ENCODE measurements at regions of chr1 and their contacts with region 1.

Region 1: GRCh38 chr1:32716312-32717148 is 14.0 kb upstream of the SYNC start:
- DNase-seq: no peak
- ATAC-seq: peak; percentile 57

Region 2: GRCh38 chr1:32773018-32773763 is 56.7 kb after region 1 on chr1:
- intact Hi-C with region 1: loop called (anchors 1 kb)
- DNase-seq: peak; percentile 88
- ATAC-seq: peak; percentile 86

Region 3: DNA sequence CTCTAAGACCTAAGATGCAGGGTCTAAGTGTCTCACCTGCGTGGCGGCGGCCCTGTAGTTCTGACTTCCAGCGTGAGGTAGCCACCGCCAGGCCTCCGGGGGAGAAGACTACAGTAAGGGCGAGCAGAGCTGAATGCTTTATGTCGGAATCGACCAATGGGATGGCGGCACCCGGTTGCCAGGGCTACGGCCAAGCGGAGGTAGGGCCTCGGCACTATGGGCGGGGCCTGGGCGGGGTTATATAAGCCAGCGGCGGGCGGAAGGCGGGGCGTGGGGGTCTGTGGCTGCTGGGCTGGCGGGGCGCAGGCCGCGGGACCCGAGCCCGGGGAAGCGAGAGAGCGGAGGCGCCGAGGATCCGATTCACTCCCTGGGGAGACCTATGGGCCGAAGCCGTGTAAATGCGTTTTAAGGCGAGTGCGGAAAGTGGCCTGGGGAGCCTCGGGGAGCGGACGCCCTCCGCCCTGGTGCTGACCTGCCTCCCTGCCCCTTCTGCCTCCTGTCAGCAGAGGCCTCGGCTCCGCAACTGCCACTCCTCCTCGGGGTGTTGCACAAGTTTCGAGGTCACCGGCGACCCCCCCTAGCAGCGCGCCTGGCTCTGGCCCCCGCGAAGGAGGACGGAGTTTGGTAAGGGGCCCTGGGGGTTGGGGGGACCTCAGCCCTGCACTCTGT is 364.5 kb after region 1 on chr1 and contains the start of gene AZIN2:
- intact Hi-C with region 1: loop called (anchors 5 kb)
- DNase-seq: peak; percentile 99
- ATAC-seq: peak; percentile 98
- total RNA-seq, gene AZIN2: 2.1 TPM